Activated B cell treated with CpG ODN at 0.5 μM for 24 hours (primary cell): ENCODE measurements at regions of chr3 and their contacts with region 1.

Region 1: DNA sequence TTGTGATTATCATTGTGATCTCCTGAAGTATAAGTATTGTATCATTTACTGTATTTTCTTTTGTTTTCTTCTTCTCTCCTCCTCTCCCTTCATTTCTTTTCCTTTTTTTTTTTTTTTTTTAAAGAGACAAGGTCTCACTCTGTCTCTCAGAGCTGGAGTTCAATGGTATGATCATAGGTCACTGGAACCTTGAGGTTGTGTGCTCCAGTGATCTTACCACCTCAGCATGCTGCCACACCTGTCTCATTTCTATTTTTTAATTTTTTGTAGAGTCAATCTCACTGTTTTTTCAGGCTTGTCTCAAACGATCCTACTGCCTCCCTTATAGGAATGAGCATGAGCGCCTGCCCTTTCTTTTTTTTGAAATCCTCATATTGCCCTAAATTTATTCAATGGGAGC is 23.4 kb downstream of the NMD3 start:
- DNase-seq: no peak
- ATAC-seq: no peak
- H3K4me3 Mint-ChIP-seq: no peak overlapping the region
- H3K27ac Mint-ChIP-seq: no peak overlapping the region
- H3K4me1 Mint-ChIP-seq: no peaks in the 10 kb centered on the region
- H3K27me3 Mint-ChIP-seq: no peaks in the 10 kb centered on the region
- CTCF ChIP-seq: no peak

Region 2: DNA sequence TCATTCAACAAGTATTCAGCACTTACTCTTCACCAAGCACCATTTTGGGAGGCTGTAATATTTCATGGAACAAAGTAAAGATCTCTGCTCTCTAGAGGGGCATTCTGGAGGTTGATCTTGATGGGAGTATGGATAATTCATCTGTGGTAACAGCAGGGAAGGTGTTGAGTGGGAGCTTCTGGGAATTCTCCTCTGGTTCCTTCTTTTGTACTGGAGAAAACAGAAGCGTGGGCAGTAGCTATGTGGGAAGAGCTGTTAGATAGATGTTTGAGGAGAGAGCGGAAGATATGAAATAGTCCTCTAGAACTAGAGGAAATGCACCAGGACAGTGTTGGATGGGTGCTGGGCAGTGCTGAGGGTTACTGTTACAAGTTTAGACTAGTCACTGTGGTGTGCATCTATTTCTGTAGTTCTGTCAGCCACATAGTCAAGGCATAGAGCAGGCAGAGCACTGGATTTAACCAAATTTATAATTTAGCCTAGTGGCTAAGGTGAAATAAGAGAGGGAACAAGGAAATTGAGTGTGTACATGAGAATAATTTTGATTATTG is 13.8 kb before region 1 on chr3:
- CTCF ChIA-PET with region 1: no interaction called
- POLR2A ChIA-PET with region 1: no interaction called
- intact Hi-C with region 1: loop called (anchors 2 kb)
- DNase-seq: no peak
- ATAC-seq: no peak
- H3K4me3 Mint-ChIP-seq: no peak overlapping the region
- H3K27ac Mint-ChIP-seq: no peak overlapping the region
- H3K4me1 Mint-ChIP-seq: no peaks in the 10 kb centered on the region
- H3K27me3 Mint-ChIP-seq: no peaks in the 10 kb centered on the region
- CTCF ChIP-seq: no peak